ENCODE measurements at regions of chr19 and their contacts with region 1.

Region 1: GRCh38 chr19:14405758-14406644 is 13.1 kb downstream of the DDX39A start:
- DNase-seq: peak; percentile 100
- ATAC-seq: peak; percentile 92
- H3K4me3 Mint-ChIP-seq: peak overlapping the region; percentile 81
- H3K27ac Mint-ChIP-seq: peak overlapping the region; percentile 98
- H3K4me1 Mint-ChIP-seq: peaks cover 14% of the 10 kb centered on the region
- H3K27me3 Mint-ChIP-seq: no peaks in the 10 kb centered on the region
- CTCF ChIP-seq: peak; percentile 83

Region 2: GRCh38 chr19:14136509-14137281 is 269.3 kb before region 1 on chr19 and contains the start of gene ASF1B:
- CTCF ChIA-PET with region 1: interaction called, 91 read pairs
- POLR2A ChIA-PET with region 1: interaction called, 12 read pairs
- DNase-seq: peak; percentile 98
- ATAC-seq: peak; percentile 90
- H3K4me3 Mint-ChIP-seq: peak within 1 kb of the TSS; percentile 86
- H3K27ac Mint-ChIP-seq: peak within 1 kb of the TSS; percentile 98
- H3K4me1 Mint-ChIP-seq: peaks cover 19% of the 10 kb centered on the region
- H3K27me3 Mint-ChIP-seq: no peaks in the 10 kb centered on the region; the same call in 1 of the 2 replicates
- CTCF ChIP-seq: no peak; the same call in 1 of the 2 replicates
- total RNA-seq, gene ASF1B: 37.1 to 40.4 TPM (median 38.4 TPM) in 3 replicates

Region 3: DNA sequence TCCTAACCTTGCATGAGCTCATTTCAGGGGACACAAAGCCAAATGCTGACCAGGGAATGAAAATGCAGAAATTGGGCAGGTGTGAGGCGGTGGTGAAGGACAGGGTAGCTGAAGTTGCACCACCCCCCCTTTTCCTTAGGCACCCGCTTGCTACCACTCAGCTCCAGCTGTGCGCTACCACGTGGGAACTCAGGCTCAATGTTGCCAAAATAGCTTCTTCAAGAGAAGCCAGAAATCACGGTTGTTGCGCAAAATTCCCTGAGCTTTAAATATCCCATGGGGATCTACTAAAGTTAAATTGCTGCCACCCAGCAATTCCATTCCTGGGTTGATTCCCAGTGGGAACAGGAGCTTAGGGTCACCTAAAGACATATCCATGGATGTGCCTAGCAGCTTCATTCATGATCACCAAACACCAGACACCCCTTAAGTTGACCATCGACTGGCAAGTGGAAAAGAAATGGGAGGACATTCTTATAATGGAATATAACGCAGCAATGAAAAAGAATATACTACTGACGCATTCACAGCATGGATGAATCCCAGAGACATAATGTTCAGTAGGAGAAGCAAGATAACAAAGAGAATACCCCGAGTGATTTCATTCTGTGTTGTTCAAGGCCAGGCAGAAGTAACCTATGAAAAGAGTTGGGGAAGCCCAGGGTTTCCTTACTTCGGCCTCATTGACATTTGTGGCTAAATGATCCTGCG is 187.2 kb before region 1 on chr19:
- CTCF ChIA-PET with region 1: interaction called, 10 read pairs
- POLR2A ChIA-PET with region 1: no interaction called
- DNase-seq: no peak
- ATAC-seq: no peak
- H3K4me3 Mint-ChIP-seq: no peak overlapping the region
- H3K27ac Mint-ChIP-seq: no peak overlapping the region
- H3K4me1 Mint-ChIP-seq: peaks cover 15% of the 10 kb centered on the region
- H3K27me3 Mint-ChIP-seq: peaks cover 5% of the 10 kb centered on the region
- CTCF ChIP-seq: no peak

Region 4: GRCh38 chr19:14375055-14375581 is 30.9 kb before region 1 on chr19:
- CTCF ChIA-PET with region 1: interaction called, 38 read pairs
- POLR2A ChIA-PET with region 1: no interaction called
- DNase-seq: no peak
- ATAC-seq: no peak
- H3K4me3 Mint-ChIP-seq: no peak overlapping the region
- H3K27ac Mint-ChIP-seq: no peak overlapping the region
- H3K4me1 Mint-ChIP-seq: peaks cover 25% of the 10 kb centered on the region
- H3K27me3 Mint-ChIP-seq: peaks cover under 1% of the 10 kb centered on the region; the same call in 1 of the 2 replicates
- CTCF ChIP-seq: no peak

Region 5: DNA sequence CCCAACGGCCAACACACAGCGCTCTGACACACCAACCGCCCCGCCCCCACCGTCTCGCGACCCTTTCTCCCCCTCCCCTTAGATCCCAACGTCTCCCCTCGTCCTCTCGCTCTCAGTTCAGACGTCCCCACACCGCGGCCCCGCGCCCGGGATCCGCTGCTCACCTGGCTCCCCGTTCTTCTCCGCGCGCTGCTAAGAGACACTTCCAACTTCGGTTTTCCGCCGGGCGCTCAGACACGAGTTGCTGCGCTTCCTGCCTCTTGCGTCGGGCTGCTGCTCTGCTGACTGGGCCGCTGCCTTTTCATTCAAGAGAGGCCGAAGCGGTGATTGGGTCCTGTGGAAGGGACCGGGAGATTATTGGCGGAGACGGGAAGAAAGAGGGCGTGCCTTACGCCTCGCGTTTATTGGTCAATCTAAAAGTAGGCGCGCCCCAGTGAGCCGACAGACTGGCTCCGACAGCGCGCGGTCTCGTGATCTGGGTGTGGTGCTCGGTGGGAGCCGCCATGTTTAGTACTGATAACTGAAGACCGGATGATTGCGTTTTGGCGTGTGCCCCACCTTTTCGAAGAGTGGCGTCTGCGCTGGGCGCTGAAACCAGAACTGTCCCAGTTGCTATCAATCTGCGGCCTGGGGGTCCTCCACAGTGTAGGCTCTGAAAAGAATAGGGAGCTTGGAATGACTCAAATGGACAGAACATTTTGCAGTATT is 13.3 kb after region 1 on chr19 and contains the start of gene DDX39A:
- CTCF ChIA-PET with region 1: interaction called, 37 read pairs
- POLR2A ChIA-PET with region 1: interaction called, 5 read pairs
- DNase-seq: peak; percentile 97
- ATAC-seq: peak; percentile 98
- H3K4me3 Mint-ChIP-seq: peak within 1 kb of the TSS; percentile 99
- H3K27ac Mint-ChIP-seq: peak within 1 kb of the TSS; percentile 99
- H3K4me1 Mint-ChIP-seq: peaks cover 29% of the 10 kb centered on the region
- H3K27me3 Mint-ChIP-seq: no peaks in the 10 kb centered on the region
- CTCF ChIP-seq: no peak
- total RNA-seq, gene DDX39A: 103 to 136 TPM (median 105 TPM) in 3 replicates

Region 6: DNA sequence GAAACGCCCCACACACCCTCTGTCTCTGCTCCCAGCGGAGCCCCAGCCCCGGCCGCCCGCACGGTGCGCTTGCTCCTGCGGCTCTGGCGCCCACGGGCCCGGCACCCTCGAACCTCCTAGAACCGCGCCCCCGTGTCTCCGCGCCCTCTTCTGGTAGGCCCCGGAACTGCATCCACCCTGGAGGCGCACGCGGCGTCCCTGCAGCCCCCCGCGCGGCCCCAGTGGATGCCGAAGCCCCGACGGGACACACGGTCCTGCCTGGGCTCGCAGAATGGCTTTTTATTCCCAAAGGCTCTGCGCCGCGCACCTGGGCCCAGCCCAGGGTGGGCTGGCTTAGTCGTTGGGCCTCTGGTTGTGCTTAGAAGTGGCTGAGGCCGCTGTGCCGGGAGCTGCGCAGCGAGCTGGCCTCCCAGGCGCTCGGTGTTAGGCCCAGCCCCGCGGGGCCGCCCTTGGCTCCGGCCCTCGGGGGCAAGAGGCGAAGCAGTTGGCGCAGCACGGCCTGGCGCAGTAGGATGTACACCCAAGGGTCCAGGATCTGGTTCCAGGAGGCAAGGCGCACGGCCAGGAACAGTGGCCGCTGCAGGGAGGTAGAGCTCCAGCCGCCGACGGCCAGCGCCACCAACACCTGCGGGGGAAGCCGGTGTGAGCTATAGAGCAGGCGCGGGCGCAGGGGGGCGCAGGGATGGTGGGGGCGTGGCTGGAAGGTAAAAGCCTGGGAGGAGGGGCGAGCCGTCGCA is 66.4 kb after region 1 on chr19:
- CTCF ChIA-PET with region 1: interaction called, 46 read pairs
- POLR2A ChIA-PET with region 1: no interaction called
- DNase-seq: peak; percentile 91
- ATAC-seq: peak; percentile 56
- H3K4me3 Mint-ChIP-seq: peak overlapping the region; percentile 56
- H3K27ac Mint-ChIP-seq: no peak overlapping the region
- H3K4me1 Mint-ChIP-seq: peaks cover 24% of the 10 kb centered on the region
- H3K27me3 Mint-ChIP-seq: peaks cover 12% of the 10 kb centered on the region
- CTCF ChIP-seq: peak; percentile 100

Region 7: GRCh38 chr19:14505488-14506432 is 99.8 kb after region 1 on chr19:
- CTCF ChIA-PET with region 1: no interaction called
- POLR2A ChIA-PET with region 1: no interaction called
- DNase-seq: peak; percentile 91
- ATAC-seq: peak; percentile 97
- H3K4me3 Mint-ChIP-seq: no peak overlapping the region
- H3K27ac Mint-ChIP-seq: no peak overlapping the region
- H3K4me1 Mint-ChIP-seq: peaks cover 6% of the 10 kb centered on the region
- H3K27me3 Mint-ChIP-seq: peaks cover 8% of the 10 kb centered on the region; the same call in 1 of the 2 replicates
- CTCF ChIP-seq: peak; percentile 96

Measured in WTC11 (cell line).